ENCODE measurements at regions of chr2 and their contacts with region 1.

Region 1: DNA sequence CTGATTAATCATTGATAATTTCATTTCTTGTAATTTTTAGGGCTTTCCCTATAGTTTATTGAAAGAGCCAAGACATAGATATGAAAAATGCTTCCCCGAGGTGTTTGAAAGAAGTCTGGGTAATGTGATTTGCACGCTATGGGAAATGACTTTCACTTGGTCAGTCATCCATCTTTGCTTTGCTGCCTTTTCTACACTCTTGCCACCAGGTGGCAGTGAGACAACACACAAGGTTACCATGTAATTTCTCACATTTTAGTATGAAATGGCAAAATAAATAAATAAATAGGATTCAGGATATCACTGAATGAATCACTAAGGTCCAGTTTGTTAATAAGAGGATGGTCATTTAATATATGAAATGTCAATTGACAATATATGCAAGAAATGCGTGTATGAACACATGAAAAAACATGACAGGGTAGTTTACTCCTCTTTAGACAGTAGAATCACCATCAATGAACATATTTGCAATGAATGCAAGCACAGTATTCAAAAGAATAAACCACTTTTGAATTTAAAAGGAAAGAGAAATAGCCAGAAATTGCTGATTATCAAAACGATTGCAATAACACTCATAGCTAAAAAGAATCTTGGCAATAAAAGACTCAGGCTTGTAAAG is 52.2 kb upstream of the KCNH7 start:
- DNase-seq: no peak
- ATAC-seq: peak in 1 of 2 donors; percentile 47
- H3K4me3 ChIP-seq: no peak overlapping the region
- H3K27ac ChIP-seq: no peak overlapping the region
- H3K4me1 ChIP-seq: no peaks in the 10 kb centered on the region
- H3K27me3 ChIP-seq: no peaks in the 10 kb centered on the region

Region 2: GRCh38 chr2:163132850-163133249 is 242.0 kb after region 1 on chr2:
- intact Hi-C with region 1: loop called in 2 of 4 experiments (anchors 5 to 10 kb)
- DNase-seq: no peak
- ATAC-seq: no peak
- H3K4me3 ChIP-seq: no peak overlapping the region
- H3K27ac ChIP-seq: no peak overlapping the region
- H3K4me1 ChIP-seq: no peaks in the 10 kb centered on the region
- H3K27me3 ChIP-seq: no peaks in the 10 kb centered on the region